Posterior vena cava (tissue), 2 donors: ENCODE measurements at regions of chr20 and their contacts with region 1.

Region 1: DNA sequence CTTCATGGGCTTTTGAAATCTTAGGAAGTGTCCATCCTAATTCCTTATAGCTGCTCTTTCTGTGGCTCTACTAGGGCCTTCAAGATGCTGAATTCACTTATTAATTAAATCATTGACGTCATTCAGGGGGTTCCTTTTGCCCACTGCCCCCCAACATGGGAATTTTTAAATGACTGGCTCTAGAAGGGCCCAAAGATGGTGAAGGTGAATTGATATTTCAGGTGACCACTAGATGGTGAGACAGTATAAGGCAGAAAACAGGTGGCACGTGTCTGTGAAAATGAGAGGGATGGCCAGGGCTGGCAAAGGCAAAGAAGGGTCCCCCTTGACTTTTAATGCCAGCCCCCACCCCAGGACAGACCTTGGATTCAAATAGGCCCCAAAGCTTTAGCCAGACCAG is 11.8 kb downstream of the GNAS start:
- DNase-seq: no peak

Region 2: DNA sequence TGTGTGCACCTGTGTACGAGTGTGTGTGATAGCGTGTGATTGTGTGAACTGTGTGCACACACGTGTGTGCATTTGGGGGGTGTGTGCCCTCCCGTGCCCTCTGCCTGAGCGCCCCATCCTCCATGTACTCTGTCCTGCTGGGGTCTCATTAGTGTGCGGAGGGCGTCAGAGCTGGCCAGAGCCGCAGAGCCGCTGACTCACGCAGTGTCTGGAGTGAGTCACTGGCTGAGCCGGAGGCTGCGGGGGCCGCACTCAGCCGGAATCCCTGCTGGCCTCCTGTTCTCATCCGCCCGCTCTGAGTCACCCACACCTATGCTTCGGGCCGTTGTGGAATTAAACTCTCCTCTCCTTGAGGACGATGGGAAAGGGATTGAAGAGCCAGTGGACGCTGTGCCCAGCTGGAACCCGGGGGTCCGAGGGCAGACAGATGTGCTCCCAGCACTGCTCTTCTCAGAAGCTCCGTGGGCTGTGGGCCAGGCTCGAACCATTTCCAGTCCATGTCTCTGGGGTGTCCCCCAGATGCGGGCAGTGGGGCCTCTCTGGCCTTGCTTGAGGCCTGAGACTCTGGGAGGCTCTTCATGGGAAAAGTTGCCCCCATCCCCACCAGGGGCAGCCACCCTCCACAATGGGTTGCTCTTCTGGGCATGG is 240.4 kb before region 1 on chr20:
- intact Hi-C with region 1: no loop called
- DNase-seq: peak; percentile 94

Region 3: DNA sequence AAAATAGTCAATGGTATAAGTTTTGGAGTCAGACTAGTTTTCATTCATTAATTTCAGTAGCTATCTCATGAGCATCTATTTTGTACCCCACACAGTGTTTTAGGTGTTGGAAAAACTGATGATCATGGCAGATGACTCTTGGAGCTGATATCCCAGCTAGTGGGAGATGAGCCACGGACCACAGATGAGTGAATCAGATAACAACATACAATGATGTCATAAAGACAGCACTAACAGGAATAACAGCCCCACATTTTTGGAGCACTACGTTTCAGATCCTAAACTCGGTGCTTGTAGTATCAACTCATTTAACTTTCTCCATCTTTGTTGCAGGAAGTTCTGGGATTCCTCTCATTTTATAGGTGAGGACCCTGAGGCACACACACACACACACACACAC is 368.3 kb after region 1 on chr20:
- intact Hi-C with region 1: loop called in 1 of 2 experiments (anchors 5 kb)
- DNase-seq: no peak

Region 4: DNA sequence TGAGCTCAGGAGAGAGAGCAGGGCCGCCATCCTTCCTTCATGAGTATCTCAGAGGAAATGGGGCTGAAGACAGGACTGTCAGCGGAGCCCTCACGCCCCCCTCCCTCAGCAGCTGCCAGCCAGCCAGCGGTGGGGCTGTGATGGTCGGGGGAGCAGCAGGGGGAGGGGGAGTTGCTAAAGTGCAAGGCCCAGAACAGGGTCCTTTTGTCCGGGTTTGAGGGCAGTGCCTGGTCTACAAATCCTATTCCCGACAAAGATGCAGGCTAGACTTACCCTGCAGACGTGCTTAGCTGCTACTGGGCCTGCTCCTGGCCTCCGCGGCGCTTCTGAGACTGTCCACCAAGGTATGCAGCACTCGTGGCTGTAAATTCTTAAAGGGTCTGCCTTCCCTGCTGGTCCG is 1794.3 kb after region 1 on chr20:
- intact Hi-C with region 1: no loop called
- DNase-seq: no peak